HepG2 (cell line): ENCODE measurements at regions of chr2 and their contacts with region 1.

Region 1: GRCh38 chr2:207710814-207711740 is at the start of gene CCNYL1:
- DNase-seq: peak; percentile 99
- ATAC-seq: peak; percentile 96
- H3K4me3 ChIP-seq: peak within 1 kb of the TSS; percentile 86 to 97 (median 91)
- H3K27ac ChIP-seq: peak within 1 kb of the TSS; percentile 96
- H3K4me1 ChIP-seq: peaks cover 40% of the 10 kb centered on the region
- H3K27me3 ChIP-seq: no peaks in the 10 kb centered on the region; a peak in 1 of 5 replicates
- CTCF ChIP-seq: peak; percentile 34
- EP300 ChIP-seq: no peak
- POLR2A ChIP-seq: peak; percentile 94
- RAD21 ChIP-seq: 0 out of 2 replicates have a peak, but pooled peaks have one; percentile 20
- total RNA-seq, gene CCNYL1: 12.5 and 20.2 TPM in 2 replicates

Region 2: DNA sequence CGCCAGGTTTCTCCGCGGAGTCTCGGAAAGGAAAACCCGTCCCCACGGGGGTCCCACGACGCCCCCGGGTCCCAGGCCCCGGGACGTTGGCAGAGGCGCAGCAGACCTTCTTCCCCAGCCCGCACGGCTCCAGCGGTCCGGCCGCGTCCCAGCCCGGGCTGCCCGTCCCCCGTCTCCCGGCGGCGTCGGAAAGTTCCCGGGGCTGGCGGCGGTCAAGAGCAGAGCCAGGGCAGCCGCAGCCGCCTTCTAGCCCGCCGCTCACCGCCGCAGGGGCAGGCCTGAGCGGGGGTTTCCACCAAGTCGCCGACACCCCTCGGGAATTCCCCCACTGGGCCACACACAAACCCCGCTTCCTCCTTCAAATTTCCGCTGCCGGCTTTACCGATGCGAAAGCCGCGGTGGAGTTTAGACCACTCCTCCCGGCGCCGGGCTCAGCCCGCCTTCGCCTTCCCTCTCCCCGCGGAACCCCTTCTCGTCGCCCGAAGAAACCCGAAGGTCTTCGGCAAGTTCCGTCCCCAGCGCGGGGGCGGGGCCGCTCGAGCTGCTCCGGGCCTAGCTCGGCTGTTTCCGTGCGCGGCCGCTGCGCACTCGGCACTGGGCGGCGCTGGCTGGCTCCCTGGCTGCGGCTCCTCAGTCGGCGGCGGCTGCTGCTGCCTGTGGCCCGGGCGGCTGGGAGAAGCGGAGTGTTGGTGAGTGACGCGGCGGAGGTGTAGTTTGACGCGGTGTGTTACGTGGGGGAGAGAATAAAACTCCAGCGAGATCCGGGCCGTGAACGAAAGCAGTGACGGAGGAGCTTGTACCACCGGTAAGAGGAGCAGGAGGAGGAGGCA is 181.5 kb before region 1 on chr2 and contains the start of gene CREB1:
- CTCF ChIA-PET with region 1: no interaction called
- POLR2A ChIA-PET with region 1: interaction called, 20 read pairs
- in situ Hi-C with region 1: no loop called
- intact Hi-C with region 1: loop called (anchors 1 kb)
- DNase-seq: peak; percentile 94
- ATAC-seq: peak; percentile 96
- H3K4me3 ChIP-seq: peak within 1 kb of the TSS; percentile 93 to 98 (median 94)
- H3K27ac ChIP-seq: peak within 1 kb of the TSS; percentile 96
- H3K4me1 ChIP-seq: peaks cover 44% of the 10 kb centered on the region
- H3K27me3 ChIP-seq: no peaks in the 10 kb centered on the region; a peak in 1 of 5 replicates
- CTCF ChIP-seq: peak; percentile 73
- EP300 ChIP-seq: no peak; a peak in 1 of 4 replicates
- POLR2A ChIP-seq: peak; percentile 90 to 94
- RAD21 ChIP-seq: peak; percentile 30
- total RNA-seq, gene CREB1: 51.9 and 79.5 TPM in 2 replicates

Region 3: DNA sequence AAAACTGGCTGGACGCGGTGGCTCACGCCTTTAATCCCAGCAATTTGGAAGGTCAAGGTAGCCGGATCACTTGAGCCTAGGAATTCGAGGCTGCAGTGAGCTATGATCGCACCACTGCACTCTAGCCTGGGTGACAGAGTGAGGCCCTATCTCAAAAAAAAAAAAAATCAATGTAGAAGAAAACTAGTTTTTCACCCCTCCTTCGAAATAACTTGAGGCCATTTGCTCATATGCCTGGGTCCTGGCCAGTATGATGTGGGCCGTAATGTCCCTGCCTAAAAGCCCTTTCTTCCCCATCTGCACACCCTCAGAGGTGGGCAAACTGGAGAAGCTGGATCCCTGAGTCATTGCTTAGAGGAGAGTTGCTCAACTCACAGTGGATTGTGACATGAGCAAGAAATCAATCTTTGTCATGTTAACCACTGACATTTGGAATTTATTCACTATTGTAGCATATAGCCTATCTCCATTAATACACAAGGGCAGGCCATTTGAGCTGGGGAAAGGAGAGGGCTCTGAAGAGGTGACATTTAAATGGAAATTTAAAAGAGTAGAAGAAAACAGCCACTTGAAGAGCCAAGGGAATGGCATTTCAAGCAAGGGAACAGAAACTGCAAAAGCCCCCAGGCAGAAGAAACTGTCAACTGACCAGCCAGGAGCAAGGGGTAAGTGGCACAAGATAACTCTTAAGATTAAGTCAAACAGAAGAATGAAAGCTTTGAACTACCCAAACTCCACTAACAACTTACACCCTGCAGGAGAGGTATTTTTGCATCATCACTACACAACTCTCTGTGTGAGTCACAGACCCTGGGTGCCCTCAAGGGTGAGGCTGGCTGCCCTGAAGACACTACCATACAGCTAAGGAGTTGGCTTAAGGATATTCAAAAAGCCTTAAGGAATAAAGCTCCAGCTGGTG is 78.2 kb before region 1 on chr2:
- CTCF ChIA-PET with region 1: no interaction called
- POLR2A ChIA-PET with region 1: interaction called, 10 read pairs
- in situ Hi-C with region 1: loop called (anchors 5 kb)
- intact Hi-C with region 1: loop called (anchors 2 kb)
- DNase-seq: peak; percentile 69
- ATAC-seq: peak; percentile 76
- H3K4me3 ChIP-seq: 0 out of 6 replicates have a peak overlapping the region, but pooled peaks of 1 of the 3 experiments have one; percentile 10
- H3K27ac ChIP-seq: peak overlapping the region; percentile 25
- H3K4me1 ChIP-seq: peaks cover 34% of the 10 kb centered on the region
- H3K27me3 ChIP-seq: no peaks in the 10 kb centered on the region; a peak in 3 of 5 replicates
- CTCF ChIP-seq: no peak
- EP300 ChIP-seq: peak; percentile 65 to 66; a peak in 2 of 4 replicates
- POLR2A ChIP-seq: no peak
- RAD21 ChIP-seq: no peak

Region 4: DNA sequence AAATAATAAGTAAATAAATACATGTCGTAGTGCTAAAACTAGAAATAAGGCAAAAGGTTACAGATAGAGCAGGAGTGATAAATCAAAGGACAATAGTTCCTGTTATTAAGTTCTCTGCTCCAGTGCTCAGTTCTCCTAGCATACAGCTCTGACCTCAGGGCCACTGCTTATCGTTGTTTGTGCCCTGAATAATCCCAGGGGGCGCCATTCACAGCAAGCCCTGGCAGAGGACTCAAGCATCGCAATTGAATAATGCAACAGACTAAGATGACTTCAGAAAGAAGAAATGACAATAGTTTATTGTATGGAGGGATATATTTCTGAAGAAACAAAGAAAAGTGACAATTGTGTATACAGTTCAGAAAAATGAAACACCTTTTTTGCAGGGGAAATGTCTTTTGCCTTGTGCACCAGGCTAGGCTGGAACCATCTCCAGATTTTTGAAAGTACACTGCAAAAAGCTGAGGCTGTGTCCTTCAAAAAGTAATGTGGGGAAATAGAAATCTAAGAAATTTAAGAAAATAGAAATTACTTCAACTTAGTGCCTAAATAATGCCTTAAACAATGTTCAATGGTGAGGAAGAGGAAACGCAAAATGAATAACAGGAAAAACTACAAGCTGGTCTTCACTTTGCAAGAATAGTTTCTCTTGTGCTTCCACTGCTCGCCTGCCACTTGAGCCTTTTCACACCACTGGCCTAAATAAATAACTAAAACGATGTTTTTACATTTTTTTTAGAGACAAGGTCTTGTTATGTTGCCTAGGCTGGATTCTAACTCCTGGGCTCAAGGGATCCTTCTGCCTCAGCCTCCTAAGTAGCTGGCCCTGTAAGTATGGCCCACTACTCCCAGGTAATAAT is 18.6 kb before region 1 on chr2:
- CTCF ChIA-PET with region 1: no interaction called
- POLR2A ChIA-PET with region 1: interaction called, 12 read pairs
- in situ Hi-C with region 1: no loop called
- intact Hi-C with region 1: no loop called
- DNase-seq: peak; percentile 58
- ATAC-seq: peak; percentile 91
- H3K4me3 ChIP-seq: no peak overlapping the region
- H3K27ac ChIP-seq: no peak overlapping the region
- H3K4me1 ChIP-seq: peaks cover 46% of the 10 kb centered on the region
- H3K27me3 ChIP-seq: 0 out of 5 replicates have a peak, but pooled peaks cover 0 to 4% of the 10 kb centered on the region in 2 experiments
- CTCF ChIP-seq: peak; percentile 75
- EP300 ChIP-seq: no peak
- POLR2A ChIP-seq: no peak
- RAD21 ChIP-seq: peak; percentile 63

Region 5: DNA sequence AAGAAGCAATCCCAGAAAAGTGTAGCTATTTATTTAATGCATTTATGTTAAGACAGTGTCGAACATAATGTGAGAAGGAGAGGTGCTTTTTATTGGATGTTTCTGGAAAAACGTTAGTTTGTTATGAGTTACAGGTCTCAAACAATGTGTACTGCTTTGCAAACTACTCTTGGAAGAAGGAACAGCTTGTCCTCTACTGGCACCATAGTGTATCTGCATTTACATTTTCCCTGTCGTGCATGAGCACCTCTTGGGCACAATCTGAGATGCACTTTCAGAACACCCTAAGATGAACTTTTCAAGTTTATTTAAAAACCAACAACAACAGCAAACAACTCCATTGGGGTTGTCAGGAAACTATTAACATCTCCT is 23.2 kb after region 1 on chr2:
- CTCF ChIA-PET with region 1: interaction called, 3 read pairs
- POLR2A ChIA-PET with region 1: interaction called, 60 read pairs
- in situ Hi-C with region 1: no loop called
- intact Hi-C with region 1: loop called (anchors 1 kb)
- DNase-seq: peak; percentile 75
- ATAC-seq: peak; percentile 94
- H3K4me3 ChIP-seq: peak overlapping the region; percentile 29 to 50 (median 40); a peak in 4 of 6 replicates
- H3K27ac ChIP-seq: peak overlapping the region; percentile 89
- H3K4me1 ChIP-seq: peaks cover 34% of the 10 kb centered on the region
- H3K27me3 ChIP-seq: no peaks in the 10 kb centered on the region
- CTCF ChIP-seq: peak; percentile 92
- EP300 ChIP-seq: no peak
- POLR2A ChIP-seq: no peak
- RAD21 ChIP-seq: peak; percentile 89

Region 6: GRCh38 chr2:208254871-208255556 is 543.9 kb after region 1 on chr2 and contains the start of gene IDH1:
- CTCF ChIA-PET with region 1: no interaction called
- POLR2A ChIA-PET with region 1: interaction called, 6 read pairs
- in situ Hi-C with region 1: loop called (anchors 25 kb)
- intact Hi-C with region 1: no loop called
- DNase-seq: peak; percentile 94
- ATAC-seq: peak; percentile 81
- H3K4me3 ChIP-seq: peak within 1 kb of the TSS; percentile 85 to 100 (median 100)
- H3K27ac ChIP-seq: peak within 1 kb of the TSS; percentile 97
- H3K4me1 ChIP-seq: peaks cover 65% of the 10 kb centered on the region
- H3K27me3 ChIP-seq: no peaks in the 10 kb centered on the region; a peak in 2 of 5 replicates
- CTCF ChIP-seq: peak; percentile 84
- EP300 ChIP-seq: 0 out of 4 replicates have a peak, but pooled peaks of 1 of the 2 experiments have one; percentile 18
- POLR2A ChIP-seq: peak; percentile 86 to 99
- RAD21 ChIP-seq: peak; percentile 84
- total RNA-seq, gene IDH1: 1,077 and 1,654 TPM in 2 replicates